ENCODE measurements at regions of chr5 and their contacts with region 1.

Region 1: GRCh38 chr5:7271403-7272119 is 124.4 kb upstream of the ADCY2 start:
- DNase-seq: no peak
- ATAC-seq: no peak
- H3K4me3 ChIP-seq: no peak overlapping the region
- H3K27ac ChIP-seq: no peak overlapping the region
- H3K4me1 ChIP-seq: no peaks in the 10 kb centered on the region
- H3K27me3 ChIP-seq: no peaks in the 10 kb centered on the region
- CTCF ChIP-seq: no peak

Region 2: DNA sequence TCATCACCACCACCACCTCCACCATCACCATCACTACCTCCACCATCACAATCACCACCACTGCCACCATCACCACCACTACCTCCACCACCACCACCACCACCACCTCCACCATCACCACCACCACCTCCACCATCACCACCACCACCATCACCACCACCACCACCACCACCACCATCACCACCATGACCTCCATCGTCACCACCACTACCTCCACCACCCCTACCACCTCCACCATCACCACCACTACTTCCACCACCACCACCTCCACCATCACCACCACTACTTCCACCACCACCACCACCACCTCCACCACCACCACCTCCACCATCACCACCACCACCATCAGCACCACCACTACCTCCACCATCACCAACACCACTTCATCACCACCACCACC is 100.8 kb after region 1 on chr5:
- intact Hi-C with region 1: loop called in 1 of 2 experiments (anchors 10 kb)
- DNase-seq: no peak
- ATAC-seq: peak in 2 of 4 donors; percentile 27 to 54
- H3K4me3 ChIP-seq: no peak overlapping the region
- H3K27ac ChIP-seq: no peak overlapping the region
- H3K4me1 ChIP-seq: no peaks in the 10 kb centered on the region
- H3K27me3 ChIP-seq: no peaks in the 10 kb centered on the region
- CTCF ChIP-seq: no peak